Activated naive CD4-positive, alpha-beta T cell treated with anti-CD3 and anti-CD28 coated beads for 36 hours (primary cell): ENCODE measurements at regions of chr20 and their contacts with region 1.

Region 1: DNA sequence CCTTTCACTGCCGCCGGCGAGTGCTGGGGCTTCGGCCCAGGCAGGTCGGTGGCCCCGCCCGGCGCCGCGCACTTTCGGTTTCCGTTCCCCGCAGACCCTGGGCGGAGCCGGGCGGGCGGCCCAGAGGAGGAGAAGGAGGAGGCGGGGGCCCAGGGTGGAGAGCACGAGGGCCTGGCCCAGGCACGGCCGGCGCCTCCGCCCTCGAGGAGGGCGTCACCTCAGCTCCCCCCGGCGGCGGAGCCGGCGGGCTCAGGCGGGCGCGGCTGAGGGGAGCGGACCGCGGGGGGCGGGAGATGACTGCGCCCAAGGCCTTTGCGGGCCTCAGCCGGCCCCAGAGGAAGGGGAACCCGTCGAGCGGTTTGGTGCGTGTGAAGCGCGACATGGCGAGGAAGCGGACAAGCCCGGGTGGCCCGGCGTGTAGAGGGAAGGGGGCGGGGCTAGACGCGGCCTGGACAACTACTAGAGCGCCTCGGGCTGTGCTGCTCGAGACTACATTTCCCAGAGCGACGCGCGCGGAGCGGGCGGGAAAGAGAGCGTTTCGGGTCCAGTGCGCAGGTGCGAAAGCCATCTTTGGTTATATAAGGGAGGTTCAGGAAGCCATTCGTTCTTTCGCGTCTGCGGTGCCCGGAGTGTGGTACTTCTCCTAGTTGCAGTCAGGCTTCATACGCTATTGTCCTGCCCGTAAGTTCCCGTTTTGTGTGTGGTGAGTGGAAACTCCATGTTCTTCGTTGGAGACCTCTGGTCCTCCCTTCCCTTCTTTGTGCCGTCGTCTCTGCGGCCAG is at the start of gene ZNFX1:
- DNase-seq: peak; percentile 99
- H3K4me3 Mint-ChIP-seq: peak within 1 kb of the TSS; percentile 99
- H3K27ac Mint-ChIP-seq: peak within 1 kb of the TSS; percentile 100
- H3K4me1 Mint-ChIP-seq: peaks cover 62% of the 10 kb centered on the region
- H3K27me3 Mint-ChIP-seq: no peaks in the 10 kb centered on the region
- total RNA-seq, gene ZNFX1: 18.2 to 19.0 TPM

Region 2: DNA sequence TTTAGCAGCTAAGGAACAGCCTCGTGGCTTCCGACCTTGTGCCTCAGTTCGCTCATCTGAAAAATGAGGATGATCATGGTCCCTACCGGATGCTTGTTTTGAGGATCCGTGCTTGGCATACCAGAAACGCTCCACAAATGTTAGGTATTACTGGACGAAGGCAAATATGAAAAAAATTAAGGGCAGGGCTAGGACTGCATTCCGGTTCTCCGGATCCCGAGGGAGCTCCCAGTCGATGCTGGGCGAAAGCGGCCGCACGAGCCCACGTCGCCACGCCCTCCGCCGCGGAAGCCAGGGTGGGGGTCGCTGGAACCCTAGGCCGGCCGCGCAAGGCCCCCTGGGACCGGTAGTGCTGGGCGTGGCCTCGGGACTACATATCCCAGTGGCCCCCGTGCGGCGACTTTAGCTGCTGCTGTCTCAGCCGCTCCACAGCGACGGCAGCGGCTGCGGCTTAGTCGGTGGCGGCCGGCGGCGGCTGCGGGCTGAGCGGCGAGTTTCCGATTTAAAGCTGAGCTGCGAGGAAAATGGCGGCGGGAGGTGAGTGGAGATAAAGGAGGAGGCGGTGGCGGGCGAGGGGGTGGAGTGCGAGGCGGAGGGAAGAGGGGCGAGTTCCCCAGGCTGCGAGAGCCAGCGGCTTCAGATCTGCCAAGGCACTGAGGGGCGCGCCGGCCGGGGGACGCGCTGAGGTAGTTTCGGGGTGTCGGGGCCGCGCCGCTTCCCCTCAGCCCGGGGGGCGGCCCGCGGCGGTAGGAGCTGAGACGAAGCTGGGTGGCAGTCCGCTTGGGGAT is 1776.5 kb before region 1 on chr20 and contains the start of gene NCOA3:
- CTCF ChIA-PET with region 1: no interaction called
- intact Hi-C with region 1: loop called (anchors 5 kb)
- DNase-seq: peak; percentile 96
- H3K4me3 Mint-ChIP-seq: peak within 1 kb of the TSS; percentile 97
- H3K27ac Mint-ChIP-seq: peak within 1 kb of the TSS; percentile 95
- H3K4me1 Mint-ChIP-seq: peaks cover 52% of the 10 kb centered on the region
- H3K27me3 Mint-ChIP-seq: no peaks in the 10 kb centered on the region
- total RNA-seq, gene NCOA3: 48.3 to 53.2 TPM

Region 3: GRCh38 chr20:48828022-48828743 is 450.0 kb before region 1 on chr20:
- CTCF ChIA-PET with region 1: no interaction called
- intact Hi-C with region 1: loop called (anchors 10 kb)
- DNase-seq: peak; percentile 64
- H3K4me3 Mint-ChIP-seq: peak overlapping the region; percentile 77
- H3K27ac Mint-ChIP-seq: no peak overlapping the region
- H3K4me1 Mint-ChIP-seq: peaks cover 40% of the 10 kb centered on the region
- H3K27me3 Mint-ChIP-seq: peaks cover 20% of the 10 kb centered on the region

Region 4: GRCh38 chr20:49186535-49187329 is 91.5 kb before region 1 on chr20:
- CTCF ChIA-PET with region 1: interaction called, 3 read pairs
- intact Hi-C with region 1: loop called (anchors 1 kb)
- DNase-seq: peak; percentile 84
- H3K4me3 Mint-ChIP-seq: peak overlapping the region; percentile 82
- H3K27ac Mint-ChIP-seq: peak overlapping the region; percentile 90
- H3K4me1 Mint-ChIP-seq: peaks cover 49% of the 10 kb centered on the region
- H3K27me3 Mint-ChIP-seq: no peaks in the 10 kb centered on the region

Region 5: DNA sequence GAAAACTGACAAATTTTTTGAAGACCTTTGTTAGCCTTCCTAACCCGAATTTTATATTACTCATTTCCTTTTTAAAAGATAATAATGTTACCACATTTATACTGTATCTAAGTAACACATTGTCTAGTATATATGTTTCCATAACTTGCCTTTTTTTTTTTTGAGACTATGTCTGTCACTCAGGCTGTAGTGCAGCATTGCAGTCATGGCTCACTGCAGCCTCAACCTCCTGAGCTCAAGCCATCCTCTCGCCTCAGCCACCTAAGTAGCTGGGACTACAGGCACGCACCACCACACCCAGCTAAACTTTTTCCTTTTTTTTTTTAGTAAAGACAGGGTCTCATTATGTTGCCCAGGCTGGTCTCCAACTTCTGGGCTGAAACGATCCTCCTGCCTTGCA is 18.9 kb before region 1 on chr20:
- CTCF ChIA-PET with region 1: interaction called, 8 read pairs
- intact Hi-C with region 1: loop called (anchors 1 kb)
- DNase-seq: no peak
- H3K4me3 Mint-ChIP-seq: no peak overlapping the region
- H3K27ac Mint-ChIP-seq: peak overlapping the region; percentile 68
- H3K4me1 Mint-ChIP-seq: peaks cover 20% of the 10 kb centered on the region
- H3K27me3 Mint-ChIP-seq: no peaks in the 10 kb centered on the region

Region 6: GRCh38 chr20:49812463-49813304 is 534.5 kb after region 1 on chr20 and contains the start of gene SLC9A8:
- CTCF ChIA-PET with region 1: no interaction called
- intact Hi-C with region 1: loop called (anchors 2 kb)
- DNase-seq: peak; percentile 92
- H3K4me3 Mint-ChIP-seq: peak within 1 kb of the TSS; percentile 94
- H3K27ac Mint-ChIP-seq: peak within 1 kb of the TSS; percentile 94
- H3K4me1 Mint-ChIP-seq: peaks cover 26% of the 10 kb centered on the region
- H3K27me3 Mint-ChIP-seq: no peaks in the 10 kb centered on the region
- total RNA-seq, gene SLC9A8: 11.2 to 11.4 TPM